PC-3 (cell line): ENCODE measurements at regions of chr19 and their contacts with region 1.

Region 1: DNA sequence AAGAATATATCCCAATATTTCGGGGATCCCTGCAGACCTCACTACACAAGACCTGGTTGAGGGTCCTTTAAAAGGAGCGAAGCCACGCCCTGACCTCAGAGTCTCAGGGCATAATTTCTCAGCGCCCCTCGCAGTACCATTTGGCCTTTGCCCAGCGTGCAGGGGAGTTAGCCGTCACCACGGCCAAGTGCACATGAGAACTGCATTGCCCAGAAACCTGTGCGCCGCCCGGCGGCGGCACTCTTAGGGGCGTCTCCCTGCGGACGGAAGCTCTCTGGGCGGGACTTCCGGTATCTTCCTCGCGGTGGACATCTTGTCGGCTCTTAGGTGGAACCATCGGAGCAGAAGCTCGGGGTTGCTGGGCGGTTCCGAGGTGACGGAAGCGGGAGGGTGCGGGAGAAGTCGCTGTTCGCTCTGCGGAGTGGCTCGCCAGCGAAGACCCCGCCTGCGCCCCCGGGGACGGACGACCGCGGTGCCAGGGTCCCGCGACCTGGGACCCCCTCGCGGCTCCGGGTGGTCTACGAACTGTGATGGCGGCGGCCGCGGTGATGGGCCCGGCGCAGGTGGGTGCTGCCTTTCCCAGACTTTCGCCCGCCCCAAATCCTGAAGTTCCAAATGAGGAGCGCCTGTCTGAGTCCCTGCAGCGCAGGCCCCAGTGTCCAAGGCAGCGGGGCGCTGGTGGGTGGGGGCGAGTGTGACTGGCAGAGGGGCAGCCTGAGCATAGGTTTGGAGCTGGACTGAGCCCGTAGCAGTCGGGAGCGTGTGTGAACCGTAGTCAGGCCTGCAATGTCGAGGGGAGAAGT is at the start of gene ZNF134:
- DNase-seq: peak; percentile 95
- ATAC-seq: peak; percentile 100
- H3K4me3 ChIP-seq: peak within 1 kb of the TSS; percentile 91
- H3K27ac ChIP-seq: no peak within 1 kb of the TSS
- H3K4me1 ChIP-seq: no peaks in the 10 kb centered on the region
- H3K27me3 ChIP-seq: no peaks in the 10 kb centered on the region
- CTCF ChIP-seq: no peak; the same call in 1 of the 2 replicates
- total RNA-seq, gene ZNF134: 22.2 and 22.3 TPM in 2 replicates

Region 2: GRCh38 chr19:57890412-57891105 is 276.4 kb after region 1 on chr19:
- CTCF ChIA-PET with region 1: no interaction called
- POLR2A ChIA-PET with region 1: interaction called, 11 read pairs
- intact Hi-C with region 1: no loop called
- DNase-seq: no peak
- ATAC-seq: no peak
- H3K4me3 ChIP-seq: no peak overlapping the region
- H3K27ac ChIP-seq: no peak overlapping the region
- H3K4me1 ChIP-seq: no peaks in the 10 kb centered on the region
- H3K27me3 ChIP-seq: no peaks in the 10 kb centered on the region
- CTCF ChIP-seq: no peak